Activated CD4-positive, alpha-beta T cell treated with anti-CD3 and anti-CD28 coated beads, Interleukin-2, amount 10 ng/mL, durations not matched to agents 24 days and 14 days (primary cell): ENCODE measurements at regions of chr10 and their contacts with region 1.

Region 1: DNA sequence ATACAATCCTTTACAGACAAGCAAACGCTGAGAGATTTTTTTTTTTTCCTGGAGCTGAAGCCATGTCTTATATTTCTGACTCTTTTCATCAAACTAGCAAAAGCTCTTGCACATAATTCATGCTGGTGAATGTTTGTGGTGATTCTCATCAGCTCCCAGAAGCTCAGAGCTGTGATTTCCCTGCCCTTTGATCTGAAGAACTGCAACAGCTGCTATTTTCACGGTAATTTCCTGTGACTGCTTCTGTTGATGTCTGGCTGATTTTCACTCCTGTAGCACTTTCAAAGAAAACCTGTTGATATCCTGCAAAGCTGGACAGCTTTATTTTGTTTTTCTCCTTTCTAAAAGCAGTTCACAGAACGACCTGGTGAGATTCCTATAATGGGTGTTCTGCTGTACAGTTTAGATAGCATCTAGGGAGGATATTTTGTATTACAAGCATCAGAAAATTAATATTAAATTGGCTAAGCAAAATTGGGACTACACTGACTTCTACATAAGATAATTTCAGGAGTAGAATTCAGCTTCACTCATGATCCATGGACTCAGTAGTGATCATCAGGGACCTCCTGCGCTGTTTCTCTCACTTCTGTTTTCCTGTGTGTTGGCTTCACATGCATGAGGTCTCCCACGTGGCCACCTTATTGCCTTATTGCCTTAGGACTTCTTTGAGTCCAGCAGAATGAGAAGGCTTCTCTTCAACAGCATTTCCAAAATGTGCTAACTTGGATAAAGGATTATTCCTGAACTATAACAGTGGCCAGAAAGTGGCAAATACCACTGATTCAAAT is 1111.6 kb upstream of the SORCS1 start:
- DNase-seq: no peak
- H3K4me3 Mint-ChIP-seq: no peak overlapping the region
- H3K27ac Mint-ChIP-seq: no peak overlapping the region
- H3K4me1 Mint-ChIP-seq: no peaks in the 10 kb centered on the region
- H3K27me3 Mint-ChIP-seq: no peaks in the 10 kb centered on the region

Region 2: DNA sequence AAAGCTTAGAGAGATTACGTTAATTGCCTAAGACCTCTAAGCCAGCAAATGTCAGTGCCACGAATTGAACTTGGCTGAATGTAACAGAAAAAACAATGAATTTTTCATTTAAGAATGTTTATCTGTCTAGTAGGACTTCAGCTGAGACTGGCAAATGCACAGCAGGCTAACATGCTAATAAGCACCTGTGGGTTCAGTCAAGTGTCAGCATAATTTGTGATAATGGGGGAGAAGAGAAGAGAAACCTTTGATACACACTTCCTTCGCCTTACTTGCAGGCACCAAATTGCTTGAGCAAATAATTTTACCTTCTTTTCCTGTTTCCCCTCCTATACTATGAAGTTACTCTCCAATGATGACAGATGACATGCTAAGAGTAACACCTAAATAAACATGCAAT is 24.9 kb after region 1 on chr10:
- intact Hi-C with region 1: loop called (anchors 2 kb)
- DNase-seq: no peak
- H3K4me3 Mint-ChIP-seq: no peak overlapping the region
- H3K27ac Mint-ChIP-seq: no peak overlapping the region
- H3K4me1 Mint-ChIP-seq: no peaks in the 10 kb centered on the region
- H3K27me3 Mint-ChIP-seq: no peaks in the 10 kb centered on the region